HAP-1 (cell line): ENCODE measurements at regions of chr4 and their contacts with region 1.

Region 1: GRCh38 chr4:70183168-70183939 is 12.2 kb upstream of the ODAM start:
- DNase-seq: peak; percentile 55 to 69
- H3K4me3 ChIP-seq: no peak overlapping the region
- H3K4me1 ChIP-seq: no peaks in the 10 kb centered on the region
- H3K27me3 ChIP-seq: no peaks in the 10 kb centered on the region

Region 2: GRCh38 chr4:69689599-69689998 is 493.8 kb before region 1 on chr4:
- in situ Hi-C with region 1: loop called (anchors 25 kb)
- DNase-seq: peak in 1 of 2 experiments; percentile 23
- H3K4me3 ChIP-seq: no peak overlapping the region
- H3K4me1 ChIP-seq: peaks cover 7% of the 10 kb centered on the region
- H3K27me3 ChIP-seq: no peaks in the 10 kb centered on the region

Region 3: DNA sequence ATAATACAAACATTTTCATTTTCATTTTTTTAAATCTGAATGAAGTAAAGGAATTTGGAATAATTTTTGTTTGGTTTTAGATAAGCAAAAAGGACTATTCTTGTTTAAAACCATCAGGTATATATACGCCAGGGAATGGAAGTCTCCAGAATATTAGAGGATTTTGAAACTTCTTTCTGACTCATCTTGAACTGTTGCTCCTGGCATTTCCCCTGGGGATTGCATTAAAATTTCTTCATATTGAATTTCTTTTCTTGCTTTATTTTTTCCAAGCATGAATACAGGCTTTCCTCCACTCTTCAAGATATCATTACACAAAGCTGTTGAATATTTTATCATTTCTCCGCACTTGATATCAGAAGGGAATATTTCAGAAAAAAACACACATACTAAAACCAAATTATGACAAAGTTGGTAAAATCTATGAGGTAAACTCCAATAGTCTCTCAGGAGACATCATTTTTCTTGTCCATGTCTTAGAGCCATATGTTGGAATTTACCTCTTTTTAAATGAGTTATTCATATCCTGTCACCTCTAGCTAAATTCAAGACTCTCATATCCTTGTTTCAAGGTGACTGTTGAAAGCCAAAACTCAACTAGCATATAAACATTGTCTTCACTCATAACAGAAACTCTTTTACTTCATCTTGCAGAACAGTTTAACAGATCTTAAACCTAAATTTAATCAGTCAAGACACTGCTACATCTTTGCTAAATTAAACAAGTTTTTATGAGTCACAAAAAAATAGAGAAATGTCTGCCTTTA is 273.2 kb before region 1 on chr4:
- in situ Hi-C with region 1: loop called (anchors 25 kb)
- DNase-seq: no peak
- H3K4me3 ChIP-seq: no peak overlapping the region
- H3K4me1 ChIP-seq: no peaks in the 10 kb centered on the region
- H3K27me3 ChIP-seq: no peaks in the 10 kb centered on the region